Caco-2 (cell line): ENCODE measurements at regions of chr7 and their contacts with region 1.

Region 1: DNA sequence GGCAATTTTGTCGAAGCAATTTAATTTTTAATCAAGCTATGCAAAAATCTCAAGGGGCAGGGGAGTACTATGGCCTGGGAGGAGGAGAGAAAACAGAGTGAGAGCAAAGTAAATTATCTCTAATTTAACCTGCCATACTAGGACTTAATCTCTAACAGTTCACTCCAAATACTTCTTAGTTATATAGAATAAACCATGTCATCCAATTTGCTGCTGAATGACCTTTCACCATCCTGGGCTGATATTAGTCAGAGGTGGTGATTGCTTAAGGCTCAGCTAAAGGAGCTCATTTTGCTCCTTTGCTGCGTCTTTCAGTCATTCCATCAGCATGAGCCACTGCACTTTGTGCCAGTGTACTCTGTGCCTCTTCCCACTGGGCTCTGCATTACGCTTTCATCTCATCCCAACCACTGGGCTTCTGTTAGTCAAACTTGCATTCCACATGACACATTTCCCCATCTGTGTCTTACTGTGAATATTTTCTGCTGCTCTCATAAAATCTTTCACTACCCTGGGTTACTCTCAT is 84.2 kb downstream of the CD36 start:
- DNase-seq: peak; percentile 63 to 84
- H3K4me3 ChIP-seq: no peak overlapping the region
- H3K4me3 Mint-ChIP-seq: peak overlapping the region; percentile 18
- H3K27ac Mint-ChIP-seq: peak overlapping the region; percentile 70
- H3K4me1 ChIP-seq: peaks cover 57% of the 10 kb centered on the region
- H3K4me1 Mint-ChIP-seq: peaks cover 49% of the 10 kb centered on the region
- H3K27me3 ChIP-seq: no peaks in the 10 kb centered on the region
- H3K27me3 Mint-ChIP-seq: no peaks in the 10 kb centered on the region
- CTCF ChIP-seq: no peak

Region 2: DNA sequence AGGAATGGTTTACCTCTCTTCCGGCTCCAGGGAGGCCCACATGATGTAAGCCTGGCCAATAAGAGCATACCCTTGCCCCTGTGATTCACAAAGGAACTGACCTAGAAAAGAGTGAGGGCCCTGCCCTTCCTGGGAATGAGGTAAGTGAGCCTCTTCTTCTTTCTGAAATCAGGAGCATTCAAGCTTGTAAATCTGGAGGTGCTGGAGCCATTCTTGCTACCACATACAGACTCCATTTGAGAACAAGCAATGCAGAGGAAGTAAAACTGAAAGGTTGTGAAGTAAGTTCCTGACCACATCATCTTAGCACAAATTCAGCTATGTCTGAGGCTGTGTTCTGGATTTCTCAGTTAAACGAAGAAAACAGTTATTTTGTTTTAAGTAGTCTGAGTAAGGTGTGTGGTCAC is 48.0 kb after region 1 on chr7:
- CTCF ChIA-PET with region 1: no interaction called
- POLR2A ChIA-PET with region 1: no interaction called
- intact Hi-C with region 1: loop called (anchors 1 kb)
- DNase-seq: peak; percentile 27 to 53
- H3K4me3 ChIP-seq: no peak overlapping the region
- H3K4me3 Mint-ChIP-seq: peak overlapping the region; percentile 23
- H3K27ac Mint-ChIP-seq: peak overlapping the region; percentile 62
- H3K4me1 ChIP-seq: peaks cover 19% of the 10 kb centered on the region
- H3K4me1 Mint-ChIP-seq: peaks cover 26% of the 10 kb centered on the region
- H3K27me3 ChIP-seq: no peaks in the 10 kb centered on the region
- H3K27me3 Mint-ChIP-seq: no peaks in the 10 kb centered on the region
- CTCF ChIP-seq: no peak

Region 3: DNA sequence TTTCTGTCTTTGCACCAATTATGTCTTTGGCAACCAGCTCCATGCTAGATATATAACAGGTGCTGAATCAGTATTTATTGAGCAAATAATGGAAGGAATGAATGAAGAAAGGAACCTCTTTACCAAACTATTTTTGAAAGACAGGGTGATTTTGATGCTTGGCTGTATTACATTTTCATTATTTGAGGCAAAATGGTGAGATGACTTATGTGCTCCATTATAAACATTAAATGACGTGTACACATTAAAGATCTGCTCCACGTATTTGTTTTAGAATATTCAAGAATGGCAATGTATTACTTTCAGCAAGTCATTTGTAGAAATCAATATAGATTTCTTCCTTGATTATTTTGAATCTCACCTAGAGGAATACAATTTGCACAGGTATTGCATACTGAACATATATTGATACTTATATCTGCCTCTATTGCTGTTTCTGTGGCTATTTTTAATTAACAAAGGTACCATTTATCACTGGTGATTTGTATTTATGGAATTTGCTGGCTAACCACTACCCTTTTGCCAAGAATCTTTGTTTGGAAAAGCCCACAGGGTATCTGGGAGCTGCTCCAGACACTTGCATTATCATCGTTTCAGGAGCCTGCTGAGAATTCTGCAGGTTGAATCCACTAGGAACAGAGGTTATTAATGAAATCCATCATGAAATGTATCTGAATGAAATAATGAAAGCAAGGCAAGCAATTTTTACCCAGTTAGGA is 104.0 kb after region 1 on chr7:
- CTCF ChIA-PET with region 1: no interaction called
- POLR2A ChIA-PET with region 1: no interaction called
- intact Hi-C with region 1: loop called (anchors 10 kb)
- DNase-seq: no peak
- H3K4me3 ChIP-seq: no peak overlapping the region
- H3K4me3 Mint-ChIP-seq: no peak overlapping the region
- H3K27ac Mint-ChIP-seq: no peak overlapping the region
- H3K4me1 ChIP-seq: peaks cover 18% of the 10 kb centered on the region
- H3K4me1 Mint-ChIP-seq: peaks cover 7% of the 10 kb centered on the region
- H3K27me3 ChIP-seq: no peaks in the 10 kb centered on the region
- H3K27me3 Mint-ChIP-seq: no peaks in the 10 kb centered on the region
- CTCF ChIP-seq: no peak